Calu3 (cell line): ENCODE measurements at regions of chr10 and their contacts with region 1.

Region 1: GRCh38 chr10:121598207-121598862 is at the start of gene FGFR2:
- DNase-seq: peak; percentile 89
- H3K4me3 Mint-ChIP-seq: peak within 1 kb of the TSS; percentile 97
- H3K27ac Mint-ChIP-seq: no peak within 1 kb of the TSS
- H3K4me1 Mint-ChIP-seq: peaks cover 7% of the 10 kb centered on the region
- H3K27me3 Mint-ChIP-seq: no peaks in the 10 kb centered on the region
- CTCF ChIP-seq: no peak
- total RNA-seq, gene FGFR2: 53.6 and 57.9 TPM in 2 replicates

Region 2: GRCh38 chr10:121324678-121325213 is 273.6 kb before region 1 on chr10:
- CTCF ChIA-PET with region 1: no interaction called
- intact Hi-C with region 1: loop called (anchors 5 kb)
- DNase-seq: peak; percentile 69
- H3K4me3 Mint-ChIP-seq: peak overlapping the region; percentile 36
- H3K27ac Mint-ChIP-seq: peak overlapping the region; percentile 90
- H3K4me1 Mint-ChIP-seq: peaks cover 41% of the 10 kb centered on the region
- H3K27me3 Mint-ChIP-seq: no peaks in the 10 kb centered on the region
- CTCF ChIP-seq: no peak

Region 3: GRCh38 chr10:121536310-121536913 is 61.9 kb before region 1 on chr10:
- CTCF ChIA-PET with region 1: no interaction called
- intact Hi-C with region 1: loop called (anchors 10 kb)
- DNase-seq: no peak
- H3K4me3 Mint-ChIP-seq: no peak overlapping the region
- H3K27ac Mint-ChIP-seq: no peak overlapping the region
- H3K4me1 Mint-ChIP-seq: peaks cover 13% of the 10 kb centered on the region
- H3K27me3 Mint-ChIP-seq: no peaks in the 10 kb centered on the region
- CTCF ChIP-seq: no peak

Region 4: DNA sequence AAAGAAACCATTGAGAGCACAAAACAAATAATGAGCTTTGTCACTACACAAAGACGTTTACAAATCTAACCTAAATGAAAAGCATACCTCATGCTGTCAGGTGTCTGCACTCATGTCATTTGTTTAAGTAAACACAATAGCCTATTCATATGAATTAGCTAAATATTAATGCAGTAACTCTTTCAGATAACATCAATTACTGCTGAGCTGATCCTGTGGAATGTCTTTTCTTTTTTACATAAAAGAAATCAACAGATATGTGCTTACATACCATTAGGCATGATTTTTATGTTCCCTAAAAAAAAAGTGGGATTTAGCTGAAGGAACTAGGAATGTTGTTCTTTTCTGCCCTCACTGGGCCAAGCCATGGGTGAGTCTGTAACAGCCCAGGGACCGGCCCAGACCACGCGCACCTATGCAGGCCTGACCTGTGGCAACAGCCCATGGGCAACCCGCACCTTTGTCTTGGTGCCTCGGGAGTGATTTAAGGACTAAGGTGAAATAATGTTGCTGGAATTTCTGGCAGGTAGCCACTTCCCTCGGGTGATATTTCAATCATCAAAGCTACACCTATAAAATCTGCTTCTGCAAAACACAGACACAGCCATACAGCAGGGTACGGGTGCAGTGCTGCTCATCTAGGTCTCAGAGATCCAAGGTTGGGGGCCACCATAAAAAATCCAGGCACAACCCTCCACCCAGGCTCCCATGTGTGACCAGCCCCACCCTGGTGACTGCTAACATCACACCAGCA is 44.6 kb before region 1 on chr10:
- CTCF ChIA-PET with region 1: interaction called, 4 read pairs
- intact Hi-C with region 1: loop called (anchors 2 kb)
- DNase-seq: peak; percentile 77
- H3K4me3 Mint-ChIP-seq: peak overlapping the region; percentile 22
- H3K27ac Mint-ChIP-seq: peak overlapping the region; percentile 65
- H3K4me1 Mint-ChIP-seq: peaks cover 24% of the 10 kb centered on the region
- H3K27me3 Mint-ChIP-seq: no peaks in the 10 kb centered on the region
- CTCF ChIP-seq: no peak

Region 5: GRCh38 chr10:121734589-121735045 is 136.3 kb after region 1 on chr10:
- CTCF ChIA-PET with region 1: no interaction called
- intact Hi-C with region 1: no loop called
- DNase-seq: no peak
- H3K4me3 Mint-ChIP-seq: no peak overlapping the region
- H3K27ac Mint-ChIP-seq: no peak overlapping the region
- H3K4me1 Mint-ChIP-seq: no peaks in the 10 kb centered on the region
- H3K27me3 Mint-ChIP-seq: no peaks in the 10 kb centered on the region
- CTCF ChIP-seq: peak; percentile 39